ENCODE measurements at regions of chr7 and their contacts with region 1.

Region 1: DNA sequence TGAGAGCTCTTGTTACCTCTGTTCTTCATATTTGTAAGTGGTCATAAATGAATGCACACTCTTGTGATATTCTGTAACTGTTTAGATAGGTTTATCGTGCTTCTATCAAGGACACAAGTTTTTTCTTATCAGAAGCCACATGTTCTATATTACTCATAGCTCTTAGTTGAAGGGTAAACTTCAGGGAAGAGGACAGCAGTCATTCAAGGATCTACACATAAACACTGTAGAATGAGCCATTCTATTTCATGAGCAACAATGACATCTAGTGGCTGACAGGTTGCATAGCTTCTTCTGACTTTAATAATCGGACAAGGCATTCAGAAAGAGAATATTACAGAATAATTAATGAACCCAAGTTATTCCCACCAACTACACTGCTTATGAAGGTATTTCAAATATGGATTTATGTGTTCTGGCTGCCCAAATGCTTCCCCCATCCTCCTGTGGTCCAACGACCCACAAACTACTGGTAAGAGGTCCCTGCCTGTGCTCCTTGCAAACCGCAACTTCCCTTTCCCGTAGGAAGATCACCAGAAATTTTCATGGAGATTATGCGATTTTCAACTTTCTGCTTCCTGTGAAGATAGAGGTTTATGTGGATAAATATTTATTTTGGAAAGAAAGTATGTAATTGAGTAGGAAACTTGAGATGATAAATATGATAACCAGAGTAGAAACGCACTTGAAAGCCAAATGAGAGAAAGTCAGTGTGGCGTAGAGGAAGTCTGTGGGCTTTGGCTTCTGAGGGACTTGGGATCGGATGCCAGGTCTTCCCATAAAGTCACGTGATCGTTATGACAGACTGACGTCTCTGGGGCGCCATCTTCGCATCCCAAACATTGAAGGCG is 16.8 kb upstream of the ABCB5 start:
- DNase-seq: no peak
- ATAC-seq: peak; percentile 68

Region 2: GRCh38 chr7:19713676-19714075 is 885.0 kb before region 1 on chr7:
- intact Hi-C with region 1: loop called (anchors 2 kb)
- DNase-seq: no peak
- ATAC-seq: no peak

Region 3: DNA sequence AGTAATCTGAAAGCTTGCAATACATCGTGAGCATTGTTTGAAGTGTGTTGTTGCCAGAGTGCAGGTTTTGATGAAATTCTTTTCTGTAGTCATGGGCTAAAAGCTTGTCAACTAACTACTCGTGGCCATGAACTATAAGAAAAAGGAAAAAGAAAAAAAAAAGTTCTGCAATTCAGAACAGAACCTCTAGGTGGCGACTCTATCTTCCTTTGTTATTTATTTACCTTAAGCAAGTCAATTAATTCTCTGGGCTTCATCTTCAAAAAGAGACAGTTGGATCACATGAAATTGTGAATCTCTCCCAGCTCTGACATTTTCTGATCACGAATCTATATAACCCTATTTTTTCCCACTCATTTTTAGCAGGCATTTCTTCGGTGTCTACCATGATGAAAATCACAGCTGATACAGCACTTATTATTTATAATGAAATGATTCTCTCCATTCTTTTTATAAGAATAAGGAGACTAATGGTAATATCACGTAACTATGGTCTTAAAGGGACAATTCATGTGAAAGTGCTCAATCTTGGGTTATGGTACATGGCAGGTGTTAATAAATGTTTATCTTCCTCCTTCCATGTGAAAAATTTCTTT is 844.1 kb before region 1 on chr7:
- intact Hi-C with region 1: loop called (anchors 5 kb)
- DNase-seq: no peak
- ATAC-seq: no peak

Region 4: DNA sequence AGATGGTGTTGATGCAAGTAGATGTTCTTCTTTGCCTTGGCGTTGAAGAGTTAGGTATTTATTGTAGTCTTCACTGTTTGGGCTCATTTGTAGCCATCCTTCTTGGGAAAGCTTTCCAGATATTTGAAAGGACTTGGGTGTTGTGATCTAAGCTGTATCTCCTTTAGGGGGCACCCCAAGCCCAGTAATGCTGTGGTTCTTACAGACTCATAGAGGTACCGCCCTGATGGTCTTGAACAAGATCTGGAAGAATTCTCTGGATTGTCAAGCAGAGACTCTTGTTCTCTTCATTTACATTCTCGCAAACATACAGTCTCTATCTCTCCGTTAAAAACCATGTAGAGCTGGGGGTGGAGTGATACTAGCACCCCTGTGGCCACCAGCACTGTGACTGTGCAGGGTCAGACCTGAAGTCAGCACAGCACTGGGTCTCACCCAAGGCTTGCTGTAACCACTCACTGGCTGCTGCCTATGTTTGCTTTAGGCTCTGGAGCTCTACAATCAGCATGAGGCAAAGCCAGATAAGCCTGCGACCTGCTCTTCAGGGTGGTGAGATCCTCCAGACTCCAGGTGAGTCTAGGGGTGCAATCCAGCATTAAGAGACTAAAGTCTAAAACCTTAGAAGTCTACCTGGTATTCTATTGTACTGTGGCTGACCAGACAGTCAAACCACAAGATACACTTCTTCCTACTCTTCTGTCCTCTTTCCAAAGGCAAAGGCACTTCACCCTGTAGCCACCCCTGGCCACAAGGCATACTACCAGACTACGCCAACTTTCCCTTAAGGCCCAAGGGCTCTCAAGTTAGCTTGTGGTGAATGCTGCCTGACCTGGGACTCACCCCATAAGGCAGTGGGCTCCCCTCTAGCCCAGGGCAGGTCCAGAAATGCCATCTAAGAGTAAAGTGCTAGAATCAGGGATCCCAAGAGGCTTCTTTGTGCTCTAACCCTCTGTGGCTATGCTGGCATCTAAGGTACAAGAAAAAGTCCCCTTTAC is 615.5 kb before region 1 on chr7:
- intact Hi-C with region 1: loop called (anchors 10 kb)
- DNase-seq: no peak
- ATAC-seq: no peak

Region 5: GRCh38 chr7:20158684-20159083 is 440.0 kb before region 1 on chr7:
- intact Hi-C with region 1: loop called (anchors 2 kb)
- DNase-seq: no peak
- ATAC-seq: peak; percentile 75

Region 6: DNA sequence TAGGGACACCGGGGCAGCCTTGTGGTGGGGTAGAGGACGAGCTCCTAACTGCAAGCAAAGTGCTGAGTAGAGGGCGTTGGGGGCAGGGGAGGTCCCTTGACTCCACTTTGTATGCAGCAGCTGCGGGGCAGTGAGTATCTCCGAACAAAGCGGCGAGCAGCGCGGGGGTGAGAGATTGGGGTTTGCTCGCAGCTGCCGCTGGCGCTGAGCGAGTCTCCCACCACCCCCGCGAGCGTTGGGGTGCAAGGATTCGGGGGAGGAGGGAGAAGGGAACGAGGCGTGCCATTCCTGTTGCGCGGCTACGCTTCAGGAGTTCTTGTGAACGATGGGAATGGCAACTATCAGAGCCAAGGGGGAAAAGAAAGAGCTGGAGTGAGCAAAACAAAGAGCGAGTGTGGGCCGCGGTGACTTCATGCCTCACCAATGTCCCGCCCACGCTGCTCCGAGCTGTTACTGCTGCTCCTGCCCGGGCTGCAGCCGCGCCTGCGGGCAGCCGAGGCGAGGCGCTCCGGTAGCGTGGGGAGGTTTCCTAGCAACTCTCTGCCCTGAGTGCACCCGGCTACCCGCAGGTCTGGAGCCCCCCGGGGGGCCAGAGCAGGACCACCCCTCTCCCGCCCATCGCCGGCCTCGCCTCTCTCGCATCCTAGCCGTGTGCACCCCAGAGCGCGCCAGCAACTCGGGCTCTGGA is 268.3 kb before region 1 on chr7 and contains the start of gene ITGB8:
- intact Hi-C with region 1: loop called (anchors 10 kb)
- DNase-seq: peak; percentile 92
- ATAC-seq: peak; percentile 94
- total RNA-seq, gene ITGB8: 2.5 TPM

Measured in Right ventricle myocardium inferior (tissue), 1 donor.